Activated CD8-positive, alpha-beta T cell treated with anti-CD3 and anti-CD28 coated beads for 36 hours (primary cell): ENCODE measurements at regions of chr6 and their contacts with region 1.

Region 1: DNA sequence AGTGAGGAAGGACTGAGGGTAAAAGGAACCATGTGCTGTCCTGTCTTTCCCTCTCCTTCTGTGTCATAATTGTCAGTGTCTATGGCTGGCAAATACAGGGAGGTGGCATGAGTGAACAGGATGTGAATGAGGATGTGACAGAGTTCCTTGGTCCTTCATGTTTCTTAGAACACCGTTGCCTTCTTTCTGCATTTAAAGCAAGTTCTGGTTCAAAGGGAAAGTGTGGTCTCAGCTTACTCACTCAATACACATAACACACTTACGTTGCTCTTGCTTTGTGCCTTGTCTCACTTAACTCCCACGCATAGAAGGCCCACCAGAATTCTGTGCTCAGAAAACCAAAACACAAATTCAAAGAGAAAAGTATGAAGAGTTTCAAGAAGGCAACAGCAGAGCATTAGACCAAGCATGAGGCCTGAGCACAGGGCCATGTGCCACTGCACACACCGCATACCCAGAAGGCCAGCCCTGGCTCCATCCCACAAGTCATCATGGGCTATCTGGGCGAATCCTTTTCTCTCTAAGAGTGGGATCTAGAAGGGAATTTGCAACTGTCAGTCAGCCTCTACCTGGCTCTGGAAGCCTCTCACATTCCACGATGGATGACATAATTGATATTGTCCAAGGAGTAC is 38.9 kb upstream of the SAYSD1 start:
- DNase-seq: peak; percentile 75
- ATAC-seq: peak; percentile 92
- H3K4me3 Mint-ChIP-seq: no peak overlapping the region
- H3K27ac Mint-ChIP-seq: peak overlapping the region; percentile 86
- H3K4me1 Mint-ChIP-seq: peaks cover 58% of the 10 kb centered on the region
- H3K27me3 Mint-ChIP-seq: peaks cover 8% of the 10 kb centered on the region
- CTCF ChIP-seq: no peak

Region 2: DNA sequence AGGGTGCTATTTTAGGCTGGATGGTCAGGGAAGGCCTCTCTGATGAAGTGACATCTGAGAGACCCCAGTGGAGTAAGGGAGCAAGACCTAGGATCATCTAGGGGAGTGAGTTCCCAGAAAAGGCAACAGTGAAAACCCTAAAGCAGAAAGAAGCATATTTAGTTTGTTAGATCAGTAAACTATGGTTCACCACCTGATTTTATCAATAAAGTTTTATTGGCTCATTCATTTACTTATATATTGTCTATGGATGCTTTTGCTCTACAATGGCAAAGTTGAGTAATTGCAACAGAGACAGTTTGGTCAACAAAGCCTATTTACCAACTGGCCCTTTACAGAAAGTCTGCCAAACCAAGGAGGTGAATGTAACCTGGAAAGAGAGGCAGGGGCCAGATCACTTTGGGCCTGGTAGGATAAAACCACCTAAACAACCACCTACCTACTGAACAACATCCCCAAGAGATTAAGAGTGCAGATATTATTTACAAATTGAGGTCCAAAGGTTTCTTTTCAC is 58.4 kb before region 1 on chr6:
- CTCF ChIA-PET with region 1: no interaction called
- POLR2A ChIA-PET with region 1: no interaction called
- intact Hi-C with region 1: no loop called
- DNase-seq: no peak
- ATAC-seq: no peak
- H3K4me3 Mint-ChIP-seq: no peak overlapping the region
- H3K27ac Mint-ChIP-seq: no peak overlapping the region
- H3K4me1 Mint-ChIP-seq: peaks cover 10% of the 10 kb centered on the region
- H3K27me3 Mint-ChIP-seq: peaks cover 13% of the 10 kb centered on the region
- CTCF ChIP-seq: no peak

Region 3: GRCh38 chr6:39111280-39111679 is 42.6 kb before region 1 on chr6:
- CTCF ChIA-PET with region 1: interaction called, 7 read pairs
- POLR2A ChIA-PET with region 1: interaction called, 6 read pairs
- intact Hi-C with region 1: loop called (anchors 2 kb)
- DNase-seq: peak; percentile 25
- ATAC-seq: peak; percentile 25
- H3K4me3 Mint-ChIP-seq: peak overlapping the region; percentile 89
- H3K27ac Mint-ChIP-seq: peak overlapping the region; percentile 91
- H3K4me1 Mint-ChIP-seq: peaks cover 77% of the 10 kb centered on the region
- H3K27me3 Mint-ChIP-seq: no peaks in the 10 kb centered on the region
- CTCF ChIP-seq: no peak

Region 4: DNA sequence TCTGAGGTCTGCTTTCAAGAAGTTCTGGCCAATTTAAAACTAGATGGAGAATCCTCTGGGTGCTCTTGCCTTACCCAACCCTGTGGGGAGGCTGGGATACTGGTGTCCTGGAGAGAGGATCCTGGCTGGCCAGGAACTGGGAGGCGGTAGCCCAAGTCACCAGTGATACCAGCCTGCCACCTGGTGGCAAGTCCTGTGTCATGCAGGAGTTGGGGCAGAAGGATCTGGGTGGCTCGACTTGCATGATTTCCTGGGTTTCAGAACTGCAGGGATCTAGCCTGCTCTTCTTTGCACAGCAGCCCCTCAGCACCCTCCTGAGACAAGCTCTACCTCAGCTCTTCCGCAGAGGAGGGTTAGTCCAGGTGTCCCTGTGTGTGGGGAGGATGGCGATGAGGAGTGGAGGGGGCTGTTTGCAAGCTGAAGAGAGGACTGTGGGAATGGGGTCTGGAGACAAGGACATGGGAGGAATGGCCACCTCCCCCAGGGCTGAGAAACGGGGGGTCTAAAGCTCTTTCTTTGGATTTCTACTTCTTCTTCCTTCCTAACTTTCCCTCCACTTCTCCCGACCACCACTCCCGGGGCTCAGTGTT is 156.2 kb after region 1 on chr6:
- CTCF ChIA-PET with region 1: interaction called, 26 read pairs
- POLR2A ChIA-PET with region 1: interaction called, 3 read pairs
- intact Hi-C with region 1: no loop called
- DNase-seq: peak; percentile 68
- ATAC-seq: peak; percentile 83
- H3K4me3 Mint-ChIP-seq: no peak overlapping the region
- H3K27ac Mint-ChIP-seq: no peak overlapping the region
- H3K4me1 Mint-ChIP-seq: peaks cover 2% of the 10 kb centered on the region
- H3K27me3 Mint-ChIP-seq: peaks cover 27% of the 10 kb centered on the region
- CTCF ChIP-seq: peak; percentile 77